Heart left ventricle (tissue), 16 donors: ENCODE measurements at regions of chr21 and their contacts with region 1.

Region 1: GRCh38 chr21:16279731-16280581 is 550.2 kb downstream of the USP25 start:
- DNase-seq: peak in 2 of 5 donors; percentile 35 to 42
- ATAC-seq: peak; percentile 51 to 88 (median 80)
- H3K4me3 ChIP-seq: peak overlapping the region in 10 of 12 donors; percentile 12 to 48 (median 33)
- H3K27ac ChIP-seq: peak overlapping the region; percentile 27 to 70 (median 52)
- H3K4me1 ChIP-seq: peaks cover 0 to 41% (median 10%) of the 10 kb centered on the region in 12 donors
- H3K27me3 ChIP-seq: no peaks in the 10 kb centered on the region
- CTCF ChIP-seq: no peak
- POLR2A ChIP-seq: no peak

Region 2: GRCh38 chr21:16211339-16212303 is 68.3 kb before region 1 on chr21:
- intact Hi-C with region 1: loop called in 1 of 10 experiments (anchors 10 kb)
- DNase-seq: no peak
- ATAC-seq: peak in 3 of 4 donors; percentile 29 to 53 (median 50)
- H3K4me3 ChIP-seq: peak overlapping the region in 6 of 12 donors; percentile 0 to 44 (median 18)
- H3K27ac ChIP-seq: peak overlapping the region in 11 of 12 donors; percentile 4 to 67 (median 40)
- H3K4me1 ChIP-seq: peaks cover 0 to 57% (median 16%) of the 10 kb centered on the region in 12 donors
- H3K27me3 ChIP-seq: no peaks in the 10 kb centered on the region
- CTCF ChIP-seq: no peak
- POLR2A ChIP-seq: no peak

Region 3: GRCh38 chr21:16323596-16323995 is 43.6 kb after region 1 on chr21:
- intact Hi-C with region 1: loop called in 1 of 10 experiments (anchors 5 kb)
- DNase-seq: no peak
- ATAC-seq: no peak
- H3K4me3 ChIP-seq: no peak overlapping the region
- H3K27ac ChIP-seq: no peak overlapping the region
- H3K4me1 ChIP-seq: peaks cover 0 to 23% (median 0%) of the 10 kb centered on the region in 12 donors
- H3K27me3 ChIP-seq: no peaks in the 10 kb centered on the region
- CTCF ChIP-seq: no peak
- POLR2A ChIP-seq: no peak